Activated CD4-positive, alpha-beta memory T cell treated with anti-CD3 and anti-CD28 coated beads for 36 hours (primary cell): ENCODE measurements at regions of chr10 and their contacts with region 1.

Region 1: DNA sequence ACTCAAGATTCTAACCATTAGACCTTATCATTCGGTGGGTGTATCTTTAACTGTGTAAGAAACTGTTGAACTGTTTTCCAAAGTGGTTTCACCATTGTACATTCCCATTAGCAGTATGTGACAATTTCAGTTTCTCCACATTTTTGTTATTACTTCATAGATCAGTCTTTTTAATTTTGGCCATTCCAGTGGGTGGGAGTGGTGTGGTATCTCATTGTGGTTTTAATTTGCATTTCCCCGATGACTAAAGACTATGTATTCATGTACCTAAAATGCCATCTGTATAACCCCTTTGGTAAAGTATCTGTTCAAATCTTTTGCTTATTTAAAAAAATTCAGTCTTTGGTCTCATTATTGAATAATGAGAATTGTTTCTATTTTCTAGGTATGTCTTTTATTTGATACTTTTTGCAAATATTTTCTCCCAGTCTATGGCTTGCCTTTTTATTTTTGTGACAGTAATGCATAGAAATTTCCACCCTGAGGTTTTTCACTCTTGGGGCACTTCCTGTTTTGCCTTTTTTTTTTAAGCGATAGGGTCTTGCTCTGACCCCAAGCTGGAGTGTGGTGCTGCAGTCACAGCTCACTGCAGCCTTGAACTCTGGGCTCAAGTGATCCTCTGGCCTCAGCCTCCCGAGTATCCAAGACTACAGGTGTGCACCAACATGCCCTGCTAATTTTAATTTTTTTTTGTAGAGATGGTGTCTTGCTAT is 141.1 kb upstream of the ITGB1 start:
- DNase-seq: no peak
- H3K4me3 Mint-ChIP-seq: peak overlapping the region; percentile 6
- H3K27ac Mint-ChIP-seq: peak overlapping the region; percentile 74
- H3K4me1 Mint-ChIP-seq: peaks cover 70% of the 10 kb centered on the region
- H3K27me3 Mint-ChIP-seq: no peaks in the 10 kb centered on the region

Region 2: GRCh38 chr10:32980558-32981468 is 118.3 kb before region 1 on chr10:
- CTCF ChIA-PET with region 1: no interaction called
- POLR2A ChIA-PET with region 1: no interaction called
- intact Hi-C with region 1: no loop called
- DNase-seq: peak; percentile 93
- H3K4me3 Mint-ChIP-seq: peak overlapping the region; percentile 85
- H3K27ac Mint-ChIP-seq: peak overlapping the region; percentile 90
- H3K4me1 Mint-ChIP-seq: peaks cover 34% of the 10 kb centered on the region
- H3K27me3 Mint-ChIP-seq: no peaks in the 10 kb centered on the region

Region 3: DNA sequence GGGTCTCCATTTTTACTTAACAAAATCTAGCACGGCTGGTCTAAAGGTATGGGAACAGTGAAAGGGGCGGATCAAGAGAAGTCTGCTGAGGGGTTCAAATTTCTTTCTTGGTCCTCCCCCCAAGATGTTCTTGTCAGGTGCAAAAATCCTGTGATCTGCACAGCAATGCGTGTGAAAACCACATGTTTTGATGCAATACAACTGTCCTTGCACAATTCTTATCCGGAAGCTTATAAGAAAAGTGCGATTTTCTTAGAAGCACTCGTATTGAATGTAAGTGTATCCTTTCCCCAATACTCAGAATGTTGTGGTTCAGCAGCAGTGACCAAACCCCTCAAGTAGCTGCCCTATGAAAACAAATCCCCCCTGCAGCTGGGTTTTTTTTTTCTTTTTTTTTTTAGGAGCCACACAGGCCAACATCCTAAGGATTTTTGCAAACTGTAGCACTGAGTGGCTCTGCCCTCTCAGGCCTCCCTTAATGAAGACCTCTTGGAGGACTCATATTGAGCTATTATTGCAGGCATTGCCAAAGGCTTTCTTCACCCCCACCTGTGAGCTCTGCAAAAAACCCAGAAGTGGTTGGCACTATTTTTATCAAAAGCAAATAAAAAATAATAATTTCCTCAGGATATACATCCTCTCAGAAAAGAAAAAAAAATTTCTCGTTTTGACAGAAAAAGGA is 10.8 kb after region 1 on chr10:
- CTCF ChIA-PET with region 1: interaction called, 4 read pairs
- POLR2A ChIA-PET with region 1: interaction called, 30 read pairs
- intact Hi-C with region 1: loop called (anchors 1 kb)
- DNase-seq: no peak
- H3K4me3 Mint-ChIP-seq: peak overlapping the region; percentile 1
- H3K27ac Mint-ChIP-seq: peak overlapping the region; percentile 72
- H3K4me1 Mint-ChIP-seq: peaks cover 79% of the 10 kb centered on the region
- H3K27me3 Mint-ChIP-seq: peaks cover 7% of the 10 kb centered on the region